ENCODE measurements at regions of chr1 and their contacts with region 1.

Region 1: DNA sequence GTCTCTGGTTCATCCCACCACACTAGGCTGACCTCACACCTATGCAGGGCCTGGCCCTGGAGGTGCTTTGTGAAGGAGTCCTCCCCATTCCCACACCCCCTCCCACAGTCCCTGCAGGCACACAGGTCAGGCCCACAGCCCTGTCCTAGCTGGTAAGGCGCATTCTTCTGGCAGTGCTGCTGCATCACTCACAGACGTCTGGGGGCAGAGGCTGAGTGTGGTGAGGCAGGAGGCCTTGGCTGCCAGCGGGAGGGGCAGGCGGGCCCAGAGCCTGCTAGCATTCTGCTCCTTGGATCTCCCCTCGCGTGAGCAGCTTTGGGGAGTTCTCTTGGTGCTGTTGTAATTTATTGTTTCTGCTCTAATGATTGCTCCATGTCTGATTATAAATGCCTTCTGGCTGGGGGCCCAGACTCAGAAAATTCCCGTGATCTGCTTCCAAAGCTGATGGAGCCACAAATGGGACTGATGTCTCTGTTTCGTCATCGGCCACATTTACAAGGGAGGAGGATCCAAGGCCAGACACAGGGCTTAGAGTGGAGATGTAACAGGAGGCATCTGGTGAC is 62.9 kb downstream of the TRABD2B start:
- DNase-seq: peak in 1 of 2 donors; percentile 98
- H3K4me3 ChIP-seq: no peak overlapping the region
- H3K27ac ChIP-seq: peak overlapping the region; percentile 55
- H3K4me1 ChIP-seq: peaks cover 29% of the 10 kb centered on the region
- H3K27me3 ChIP-seq: no peaks in the 10 kb centered on the region
- CTCF ChIP-seq: no peak
- POLR2A ChIP-seq: no peak

Region 2: DNA sequence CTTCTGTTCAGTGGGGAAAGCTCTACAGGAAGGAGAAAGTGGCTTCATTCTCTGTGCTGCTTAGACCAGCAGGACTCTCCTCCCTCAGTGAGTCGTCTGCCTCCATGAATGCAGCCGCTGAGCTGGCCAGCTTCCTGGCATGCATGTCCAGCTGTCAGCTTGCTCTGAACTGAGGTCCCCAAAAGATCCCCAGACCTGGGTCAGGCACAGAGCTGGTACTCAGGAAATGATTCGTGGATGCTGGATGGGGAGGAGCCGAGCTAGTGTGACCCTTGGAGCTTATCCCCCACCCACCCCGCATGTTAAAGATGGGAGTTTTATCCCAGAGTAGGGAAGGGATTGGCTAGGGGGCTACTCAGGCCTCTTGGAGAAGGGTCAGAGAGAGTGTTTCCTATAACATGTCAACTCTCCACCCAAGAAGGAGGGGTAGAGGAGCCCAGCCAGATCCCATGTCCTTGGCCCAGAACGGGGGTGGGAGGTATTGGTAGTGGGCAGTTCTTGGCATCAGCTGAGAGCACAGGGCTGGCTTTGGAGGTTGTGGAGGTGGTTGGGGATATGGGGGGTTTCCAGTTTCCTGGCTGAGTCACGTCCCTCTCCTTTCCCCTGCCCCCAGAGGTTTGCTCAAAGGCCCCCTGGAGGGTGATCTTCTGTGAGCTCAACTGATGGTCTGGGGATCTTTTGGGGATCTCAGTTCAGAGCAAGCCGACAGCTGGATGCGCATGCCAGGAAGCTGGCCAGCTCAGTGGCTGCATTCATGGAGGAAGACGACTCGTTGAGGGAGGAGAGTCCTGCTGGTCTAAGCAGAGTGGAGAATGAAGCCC is 386.4 kb before region 1 on chr1:
- intact Hi-C with region 1: no loop called
- DNase-seq: no peak
- H3K4me3 ChIP-seq: no peak overlapping the region
- H3K27ac ChIP-seq: no peak overlapping the region
- H3K4me1 ChIP-seq: no peaks in the 10 kb centered on the region
- H3K27me3 ChIP-seq: no peaks in the 10 kb centered on the region
- CTCF ChIP-seq: no peak
- POLR2A ChIP-seq: no peak

Region 3: GRCh38 chr1:47894713-47895537 is 39.4 kb before region 1 on chr1:
- intact Hi-C with region 1: no loop called
- DNase-seq: no peak
- H3K4me3 ChIP-seq: no peak overlapping the region
- H3K27ac ChIP-seq: no peak overlapping the region
- H3K4me1 ChIP-seq: peaks cover 19% of the 10 kb centered on the region
- H3K27me3 ChIP-seq: no peaks in the 10 kb centered on the region
- CTCF ChIP-seq: no peak
- POLR2A ChIP-seq: no peak

Region 4: DNA sequence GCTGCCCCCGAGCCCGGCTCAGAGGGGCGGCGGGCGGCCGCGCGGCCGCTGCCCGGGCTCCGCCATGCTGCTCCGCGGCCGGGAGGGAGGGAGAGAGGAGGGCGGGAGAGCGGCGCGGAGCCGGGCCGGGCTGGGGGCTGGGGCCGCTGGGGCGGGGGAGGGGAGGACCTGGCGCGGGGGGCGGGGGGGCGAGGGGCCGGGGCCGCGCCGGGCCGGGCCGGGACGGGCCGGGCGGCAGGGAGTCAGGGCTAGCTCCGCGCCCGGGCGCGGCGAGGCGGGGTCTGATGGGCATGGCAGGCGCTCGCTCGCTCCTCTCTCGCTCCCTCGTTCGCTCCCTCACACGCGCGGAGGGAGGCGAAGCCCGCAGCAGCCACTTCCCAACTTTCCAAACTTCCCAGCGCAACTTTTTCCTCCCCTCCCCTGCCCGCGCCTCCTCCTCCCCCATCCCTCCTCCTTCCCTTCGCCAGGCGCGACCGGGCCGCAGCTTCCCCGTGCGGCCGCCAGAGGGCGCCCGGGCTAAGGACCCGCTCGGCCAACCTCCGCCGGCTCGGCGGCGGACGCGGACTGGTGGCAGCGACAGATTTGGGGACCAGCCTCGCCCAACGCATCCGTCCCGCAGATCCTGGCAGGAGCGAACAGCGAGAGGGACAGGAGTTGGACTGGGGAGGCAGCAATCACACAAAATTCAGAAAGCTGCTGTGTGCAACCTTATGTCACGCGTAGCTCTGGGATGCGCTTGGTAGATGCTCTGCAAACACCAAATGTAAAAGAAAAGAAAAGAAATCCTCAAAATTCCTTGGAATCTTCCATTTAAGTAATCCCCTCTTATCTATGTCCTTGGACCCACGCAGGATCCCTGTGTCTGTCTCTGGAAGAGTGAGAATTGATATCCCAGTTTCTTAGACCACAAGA is 63.2 kb after region 1 on chr1 and contains the start of gene TRABD2B:
- intact Hi-C with region 1: loop called (anchors 2 kb)
- DNase-seq: peak; percentile 70 to 90
- H3K4me3 ChIP-seq: peak within 1 kb of the TSS; percentile 72 to 78
- H3K27ac ChIP-seq: peak within 1 kb of the TSS; percentile 87
- H3K4me1 ChIP-seq: peaks cover 33% of the 10 kb centered on the region
- H3K27me3 ChIP-seq: no peaks in the 10 kb centered on the region
- CTCF ChIP-seq: peak; percentile 80 to 94 (median 82)
- POLR2A ChIP-seq: no peak
- total RNA-seq, gene TRABD2B: 5.6 TPM

Measured in vagina (tissue), 2 donors.